SK-N-SH (cell line): ENCODE measurements at regions of chr2 and their contacts with region 1.

Region 1: DNA sequence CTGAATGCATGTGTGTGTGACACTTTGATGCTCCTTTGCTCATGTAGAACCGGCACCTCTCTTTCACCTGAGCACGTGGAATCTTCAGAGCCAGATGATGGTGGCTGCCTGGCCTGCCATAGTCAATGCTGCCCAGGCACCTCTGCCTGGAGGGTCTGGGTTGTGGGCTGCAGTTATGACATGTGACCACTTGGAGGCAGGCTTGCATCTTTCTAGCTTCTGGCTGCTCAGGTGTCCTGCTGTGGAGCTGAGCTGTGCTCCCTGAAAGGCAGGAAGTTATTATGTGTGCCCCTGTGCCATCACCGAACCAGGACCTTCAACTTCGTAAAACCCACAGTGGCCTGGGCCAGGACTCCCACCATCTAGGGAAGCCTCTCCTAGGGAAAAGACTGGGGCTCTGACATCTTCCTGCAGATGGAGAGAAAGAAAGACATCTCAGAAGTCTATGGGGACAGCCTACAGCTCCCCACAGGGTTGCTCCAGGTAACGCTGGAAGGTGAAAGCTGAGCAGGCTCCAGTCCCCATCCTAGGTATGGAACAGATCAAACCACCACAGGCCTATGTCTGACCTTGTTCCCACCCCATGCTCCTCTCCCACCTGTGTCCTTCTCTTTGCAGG is 30.2 kb downstream of the PSD4 start:
- DNase-seq: peak; percentile 86
- H3K4me3 ChIP-seq: no peak overlapping the region; a peak in 1 of 4 replicates
- H3K27ac ChIP-seq: no peak overlapping the region
- H3K4me1 ChIP-seq: no peaks in the 10 kb centered on the region; a peak in 1 of 4 replicates
- H3K27me3 ChIP-seq: no peaks in the 10 kb centered on the region
- CTCF ChIP-seq: peak; percentile 88
- EP300 ChIP-seq: no peak
- RAD21 ChIP-seq: peak; percentile 96

Region 2: GRCh38 chr2:113219889-113220641 is 16.1 kb after region 1 on chr2:
- CTCF ChIA-PET with region 1: interaction called, 13 read pairs
- POLR2A ChIA-PET with region 1: no interaction called
- DNase-seq: no peak
- H3K4me3 ChIP-seq: no peak overlapping the region
- H3K27ac ChIP-seq: no peak overlapping the region
- H3K4me1 ChIP-seq: no peaks in the 10 kb centered on the region; a peak in 1 of 4 replicates
- H3K27me3 ChIP-seq: no peaks in the 10 kb centered on the region
- CTCF ChIP-seq: no peak
- EP300 ChIP-seq: no peak
- RAD21 ChIP-seq: no peak

Region 3: DNA sequence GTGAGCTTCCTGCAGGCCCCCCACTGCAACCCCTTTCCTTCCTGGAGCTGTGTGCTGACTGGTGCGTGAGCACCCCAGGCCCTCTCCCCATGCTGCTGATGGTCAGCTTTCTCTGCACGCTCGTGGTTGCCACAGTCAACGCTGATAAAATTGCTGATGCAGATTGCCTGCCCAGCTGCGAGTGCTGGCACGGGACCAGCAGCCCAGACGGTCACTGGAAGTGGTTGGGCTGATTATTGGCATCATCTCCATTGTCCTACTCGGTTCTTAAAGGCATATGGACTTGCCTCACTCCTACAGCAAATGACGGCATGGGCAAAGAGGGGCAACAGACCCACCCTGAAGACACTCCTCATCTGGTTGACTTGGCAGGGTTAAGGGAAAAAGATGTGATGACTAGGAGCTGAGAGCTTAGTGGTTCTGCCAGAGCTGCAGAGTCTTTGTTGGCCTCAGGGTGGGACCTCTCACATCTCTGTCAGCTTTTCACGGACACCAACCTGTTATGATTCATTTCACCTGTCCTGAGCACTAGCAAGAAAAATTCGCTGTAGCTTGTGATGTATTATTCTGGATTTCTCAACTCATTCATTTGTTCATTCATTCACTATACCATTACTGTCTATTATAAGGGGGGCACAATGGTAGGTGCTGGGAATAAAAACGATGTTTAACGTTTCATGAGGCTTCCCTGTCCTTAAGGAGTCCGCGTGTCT is 36.3 kb after region 1 on chr2:
- CTCF ChIA-PET with region 1: interaction called, 46 read pairs
- POLR2A ChIA-PET with region 1: interaction called, 4 read pairs
- DNase-seq: peak; percentile 89
- H3K4me3 ChIP-seq: peak overlapping the region in 1 of 2 experiments; percentile 11; a peak in 1 of 4 replicates
- H3K27ac ChIP-seq: peak overlapping the region; percentile 22 to 84
- H3K4me1 ChIP-seq: peaks cover 21 to 22% of the 10 kb centered on the region in 2 experiments
- H3K27me3 ChIP-seq: no peaks in the 10 kb centered on the region
- CTCF ChIP-seq: 0 out of 2 replicates have a peak, but pooled peaks have one; percentile 8
- EP300 ChIP-seq: peak; percentile 44 to 54; a peak in 2 of 4 replicates
- RAD21 ChIP-seq: no peak

Region 4: DNA sequence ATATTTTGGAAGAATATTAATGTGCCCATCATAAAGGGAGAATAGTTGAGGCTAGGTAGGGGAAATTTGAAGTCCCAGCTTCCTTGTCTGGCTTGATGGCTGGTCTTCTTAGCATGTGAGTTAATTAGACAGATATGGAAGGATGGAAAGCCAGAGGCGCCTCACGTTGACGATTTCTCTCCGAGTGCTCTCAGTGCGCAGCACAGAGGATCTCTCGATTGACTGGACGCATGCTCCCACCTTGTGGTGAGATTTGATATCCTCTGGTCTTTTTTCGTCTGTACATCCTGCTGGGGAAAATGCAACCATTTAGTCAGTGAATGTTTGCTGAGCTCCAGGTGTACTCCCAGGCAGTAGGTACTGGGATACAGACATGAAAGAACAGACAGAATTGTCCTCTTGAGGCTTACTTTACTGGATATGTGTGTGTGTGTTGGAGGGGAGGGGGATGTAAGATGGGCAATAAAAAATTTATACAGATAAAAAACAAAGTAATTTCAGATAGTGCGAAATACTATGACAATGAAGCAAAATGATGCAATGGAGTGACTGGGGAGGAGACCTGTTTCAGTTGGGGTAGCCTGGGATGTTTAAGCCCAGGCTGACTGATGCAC is 166.6 kb after region 1 on chr2:
- CTCF ChIA-PET with region 1: interaction called, 43 read pairs
- POLR2A ChIA-PET with region 1: no interaction called
- DNase-seq: peak; percentile 58
- H3K4me3 ChIP-seq: no peak overlapping the region; a peak in 1 of 4 replicates
- H3K27ac ChIP-seq: no peak overlapping the region
- H3K4me1 ChIP-seq: no peaks in the 10 kb centered on the region
- H3K27me3 ChIP-seq: peaks cover 21% of the 10 kb centered on the region; the same call in 1 of the 2 replicates
- CTCF ChIP-seq: peak; percentile 69
- EP300 ChIP-seq: no peak
- RAD21 ChIP-seq: peak; percentile 85